Activated CD4-positive, alpha-beta memory T cell treated with anti-CD3 and anti-CD28 coated beads for 36 hours (primary cell): ENCODE measurements at regions of chr7 and their contacts with region 1.

Region 1: DNA sequence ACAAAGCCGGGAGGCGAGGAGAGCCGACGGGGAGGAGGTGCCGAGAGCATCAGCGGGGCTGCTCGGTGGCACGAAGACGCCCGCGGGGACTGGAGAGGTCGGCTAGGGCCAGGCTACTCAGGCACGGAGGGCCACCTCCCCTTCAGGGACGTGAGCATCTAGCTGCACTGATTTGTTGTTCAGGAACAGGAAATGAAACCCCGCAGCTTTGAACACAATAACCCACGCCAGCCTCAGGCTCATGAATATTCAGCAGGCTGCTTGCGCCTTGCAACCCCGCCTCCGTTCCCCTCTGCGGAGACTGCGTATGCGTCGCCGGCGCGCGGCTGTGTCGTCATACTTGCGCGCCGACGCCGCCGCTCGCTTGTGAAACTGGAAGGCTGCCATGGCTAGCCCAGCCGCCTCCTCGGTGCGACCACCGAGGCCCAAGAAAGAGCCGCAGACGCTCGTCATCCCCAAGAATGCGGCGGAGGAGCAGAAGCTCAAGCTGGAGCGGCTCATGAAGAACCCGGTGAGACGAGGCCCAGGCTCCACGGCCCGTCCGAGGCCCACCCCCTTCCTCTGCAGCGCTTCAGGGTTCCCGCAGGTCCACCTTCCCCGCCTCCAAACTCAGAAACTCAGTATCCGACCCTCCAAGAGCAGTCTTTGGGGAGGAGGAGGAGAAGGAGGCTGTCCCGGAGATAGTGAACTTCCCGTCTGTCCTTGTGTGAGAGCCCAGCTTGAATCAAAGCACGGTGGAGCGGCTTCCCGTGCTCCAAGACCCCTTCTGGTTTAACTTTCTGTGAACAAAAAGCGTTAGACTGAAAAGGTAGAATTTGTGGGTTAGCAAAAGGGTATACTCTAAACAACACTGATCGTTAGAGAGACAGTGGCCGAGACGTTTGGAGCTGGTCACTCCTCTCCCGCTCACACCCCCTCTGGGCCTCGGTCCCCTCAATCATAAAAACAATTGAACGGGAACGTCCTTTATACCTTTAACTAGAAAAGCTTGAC is at the start of gene PRKRIP1:
- DNase-seq: peak; percentile 91
- H3K4me3 Mint-ChIP-seq: peak within 1 kb of the TSS; percentile 94
- H3K27ac Mint-ChIP-seq: peak within 1 kb of the TSS; percentile 86
- H3K4me1 Mint-ChIP-seq: peaks cover 17% of the 10 kb centered on the region
- H3K27me3 Mint-ChIP-seq: no peaks in the 10 kb centered on the region
- total RNA-seq, gene PRKRIP1: 20.8 to 22.6 TPM

Region 2: GRCh38 chr7:101941481-101942383 is 454.6 kb before region 1 on chr7:
- CTCF ChIA-PET with region 1: no interaction called
- POLR2A ChIA-PET with region 1: no interaction called
- intact Hi-C with region 1: no loop called
- DNase-seq: no peak
- H3K4me3 Mint-ChIP-seq: no peak overlapping the region
- H3K27ac Mint-ChIP-seq: no peak overlapping the region
- H3K4me1 Mint-ChIP-seq: peaks cover 1% of the 10 kb centered on the region
- H3K27me3 Mint-ChIP-seq: no peaks in the 10 kb centered on the region

Region 3: DNA sequence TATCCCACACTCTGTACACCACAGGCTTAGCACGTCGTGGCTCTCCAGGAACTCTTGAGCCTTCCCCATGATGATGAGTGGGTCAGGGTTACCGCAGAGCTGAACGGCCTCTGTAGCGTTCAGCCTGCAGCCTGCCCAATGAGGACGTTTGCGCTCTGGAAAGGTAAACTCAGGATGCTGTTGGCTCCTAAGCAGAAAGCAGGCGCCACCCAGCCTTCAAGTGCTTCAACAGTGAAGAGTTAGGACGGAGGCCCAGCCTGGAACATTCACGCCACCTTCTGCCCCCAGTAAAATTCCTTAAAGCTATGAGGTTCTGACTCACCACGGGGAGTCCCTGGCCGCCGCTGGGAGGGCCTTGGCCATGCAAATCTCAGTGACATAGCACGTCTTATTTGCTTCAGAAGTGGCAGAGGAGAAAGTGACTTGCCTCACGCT is 271.2 kb before region 1 on chr7:
- CTCF ChIA-PET with region 1: no interaction called
- POLR2A ChIA-PET with region 1: no interaction called
- intact Hi-C with region 1: no loop called
- DNase-seq: peak; percentile 31
- H3K4me3 Mint-ChIP-seq: no peak overlapping the region
- H3K27ac Mint-ChIP-seq: no peak overlapping the region
- H3K4me1 Mint-ChIP-seq: peaks cover 10% of the 10 kb centered on the region
- H3K27me3 Mint-ChIP-seq: no peaks in the 10 kb centered on the region

Region 4: GRCh38 chr7:102286237-102287110 is 109.8 kb before region 1 on chr7 and contains the start of gene SH2B2:
- CTCF ChIA-PET with region 1: interaction called, 7 read pairs
- POLR2A ChIA-PET with region 1: interaction called, 3 read pairs
- intact Hi-C with region 1: loop called (anchors 1 kb)
- DNase-seq: peak; percentile 56
- H3K4me3 Mint-ChIP-seq: peak within 1 kb of the TSS; percentile 68
- H3K27ac Mint-ChIP-seq: no peak within 1 kb of the TSS
- H3K4me1 Mint-ChIP-seq: peaks cover 34% of the 10 kb centered on the region
- H3K27me3 Mint-ChIP-seq: peaks cover 6% of the 10 kb centered on the region
- total RNA-seq, gene SH2B2: 3.8 to 4.7 TPM

Region 5: DNA sequence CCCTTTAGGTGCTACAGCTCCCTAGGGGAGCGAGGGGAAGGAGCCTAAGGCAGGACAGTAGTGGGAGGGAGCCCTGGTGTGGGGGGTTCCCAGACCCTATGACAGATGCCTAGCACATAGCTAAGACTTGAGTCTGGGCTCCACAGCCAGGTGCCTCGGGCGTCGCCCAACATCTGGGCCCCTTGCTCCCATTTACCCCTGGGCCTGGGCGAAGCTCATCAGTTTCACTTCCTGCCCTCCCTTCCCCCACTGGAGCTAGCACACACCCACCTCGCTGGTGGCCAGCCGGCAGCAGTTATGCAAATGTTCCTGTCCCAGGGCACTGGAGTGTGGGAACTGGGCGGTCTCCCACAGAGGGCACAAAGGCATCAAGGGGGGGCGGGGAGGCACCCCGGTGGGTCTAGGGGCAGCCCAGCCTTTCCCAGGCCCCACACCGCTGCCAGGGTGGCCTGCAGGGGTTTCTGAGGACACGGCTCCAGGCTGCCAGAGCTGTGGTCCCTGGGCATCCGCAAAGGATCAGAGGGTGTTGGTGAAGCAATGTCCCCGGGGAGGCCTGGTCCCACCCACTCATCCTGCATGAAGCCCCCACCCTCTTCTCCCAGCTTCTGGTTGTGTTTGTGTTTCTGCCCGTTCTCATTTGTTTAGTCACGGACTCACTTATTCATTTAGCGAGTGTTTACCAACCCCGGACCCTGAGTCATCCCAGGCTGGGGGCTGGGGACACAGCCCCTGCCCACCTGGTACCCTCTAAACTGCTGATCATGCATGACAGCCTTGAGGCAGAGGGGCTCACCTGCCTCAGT is 89.2 kb before region 1 on chr7:
- CTCF ChIA-PET with region 1: no interaction called
- POLR2A ChIA-PET with region 1: interaction called, 4 read pairs
- intact Hi-C with region 1: loop called (anchors 1 kb)
- DNase-seq: peak; percentile 78
- H3K4me3 Mint-ChIP-seq: no peak overlapping the region
- H3K27ac Mint-ChIP-seq: peak overlapping the region; percentile 33
- H3K4me1 Mint-ChIP-seq: peaks cover 14% of the 10 kb centered on the region
- H3K27me3 Mint-ChIP-seq: no peaks in the 10 kb centered on the region

Region 6: GRCh38 chr7:102425639-102426267 is 29.4 kb after region 1 on chr7:
- CTCF ChIA-PET with region 1: interaction called, 3 read pairs
- POLR2A ChIA-PET with region 1: interaction called, 12 read pairs
- intact Hi-C with region 1: loop called (anchors 1 kb)
- DNase-seq: peak; percentile 92
- H3K4me3 Mint-ChIP-seq: peak overlapping the region; percentile 76
- H3K27ac Mint-ChIP-seq: peak overlapping the region; percentile 100
- H3K4me1 Mint-ChIP-seq: peaks cover 62% of the 10 kb centered on the region
- H3K27me3 Mint-ChIP-seq: no peaks in the 10 kb centered on the region